ENCODE measurements at regions of chr9 and their contacts with region 1.

Region 1: DNA sequence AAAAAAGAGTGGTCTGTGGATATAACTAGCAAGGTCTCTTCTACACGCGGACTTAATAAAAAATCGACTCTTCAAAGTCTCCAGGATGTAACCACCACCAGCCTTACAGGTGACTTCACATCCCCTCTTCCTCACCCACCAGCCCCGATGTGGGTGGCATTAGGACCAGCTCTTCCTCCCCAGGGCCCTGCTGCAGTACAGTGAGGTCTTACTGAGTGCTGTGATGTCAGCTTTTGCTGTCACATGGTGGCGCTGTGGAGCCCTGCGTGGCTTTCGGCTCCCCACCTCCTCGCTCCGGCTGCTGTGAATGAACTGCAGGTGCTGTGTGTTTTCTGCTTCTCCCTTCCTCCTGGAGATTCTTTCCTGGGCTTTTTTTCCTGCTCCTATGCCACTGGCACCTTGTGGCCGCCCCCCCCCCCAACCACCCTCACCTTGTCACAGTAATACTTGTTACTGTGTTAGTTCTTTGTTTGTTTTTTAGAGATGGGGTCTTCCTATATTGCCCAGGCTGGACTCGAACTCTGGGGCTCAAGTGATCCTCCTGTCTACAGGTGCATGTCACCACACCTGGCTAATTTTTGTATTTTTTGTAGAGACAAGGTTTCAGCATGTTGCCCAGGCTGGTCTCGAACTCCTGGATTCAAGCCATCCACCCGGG is 15.8 kb upstream of the RAPGEF1 start:
- DNase-seq: peak; percentile 71 to 81
- ATAC-seq: peak; percentile 97 to 98
- H3K4me3 ChIP-seq: no peak overlapping the region
- H3K27ac ChIP-seq: no peak overlapping the region
- H3K4me1 ChIP-seq: peaks cover 6% of the 10 kb centered on the region; the same call in 1 of the 3 replicates
- CTCF ChIP-seq: peak; percentile 84
- EP300 ChIP-seq: no peak
- POLR2A ChIP-seq: no peak
- RAD21 ChIP-seq: peak; percentile 61 to 67

Region 2: GRCh38 chr9:131728961-131729360 is 26.7 kb before region 1 on chr9:
- CTCF ChIA-PET with region 1: no interaction called
- POLR2A ChIA-PET with region 1: no interaction called
- DNase-seq: no peak
- ATAC-seq: no peak
- H3K4me3 ChIP-seq: no peak overlapping the region
- H3K27ac ChIP-seq: no peak overlapping the region; a peak in 1 of 6 replicates
- H3K4me1 ChIP-seq: peaks cover 57% of the 10 kb centered on the region
- CTCF ChIP-seq: no peak
- EP300 ChIP-seq: no peak
- POLR2A ChIP-seq: no peak
- RAD21 ChIP-seq: no peak

Region 3: DNA sequence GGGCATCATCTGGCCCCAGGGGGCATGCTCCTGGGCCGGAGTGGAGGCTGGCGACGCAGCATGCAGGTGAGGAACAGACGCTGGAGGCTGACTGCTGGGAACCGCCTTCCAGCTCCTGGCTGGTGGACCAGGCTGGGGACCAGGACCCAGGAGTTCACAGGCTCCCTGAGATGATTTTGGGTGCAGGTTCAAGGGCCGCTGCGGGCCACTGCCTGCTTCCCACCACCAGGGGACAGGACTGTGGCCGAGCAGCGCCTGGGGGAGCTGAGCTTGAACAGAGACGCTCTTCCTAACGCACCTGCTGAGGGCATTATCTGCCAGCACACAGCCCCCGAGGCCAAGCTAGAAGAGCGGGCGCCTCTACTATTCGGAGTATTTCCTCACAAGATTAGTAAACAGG is 116.3 kb after region 1 on chr9:
- CTCF ChIA-PET with region 1: no interaction called
- POLR2A ChIA-PET with region 1: no interaction called
- DNase-seq: no peak
- ATAC-seq: peak in 1 of 2 experiments; percentile 64; a peak in 3 of 6 replicates
- H3K4me3 ChIP-seq: no peak overlapping the region
- H3K27ac ChIP-seq: no peak overlapping the region
- H3K4me1 ChIP-seq: no peaks in the 10 kb centered on the region
- CTCF ChIP-seq: no peak
- EP300 ChIP-seq: no peak
- POLR2A ChIP-seq: no peak
- RAD21 ChIP-seq: 0 out of 5 replicates have a peak, but pooled peaks of 1 of the 2 experiments have one; percentile 12

Region 4: DNA sequence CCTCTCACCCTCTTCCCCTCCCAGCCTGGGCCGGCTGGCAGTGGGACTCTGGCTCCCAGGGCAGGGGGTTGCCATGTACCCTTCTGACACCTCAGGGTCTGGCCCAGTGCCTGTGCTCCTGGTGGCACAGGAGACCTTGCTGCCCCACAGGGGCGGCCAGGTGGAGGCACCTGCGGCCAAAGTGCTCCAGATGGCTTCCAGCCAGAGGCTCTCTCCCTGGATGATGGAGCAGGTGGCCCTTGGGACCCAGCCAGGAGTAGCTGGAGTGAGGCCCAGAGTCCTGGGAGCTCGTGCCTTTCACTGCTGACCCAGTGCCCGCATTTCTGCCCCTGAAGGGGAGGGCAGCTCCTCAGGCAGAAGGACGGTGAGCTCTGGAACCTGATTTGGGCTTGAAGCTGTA is 493.5 kb after region 1 on chr9:
- CTCF ChIA-PET with region 1: interaction called, 263 read pairs
- POLR2A ChIA-PET with region 1: no interaction called
- DNase-seq: no peak
- ATAC-seq: no peak
- H3K4me3 ChIP-seq: no peak overlapping the region
- H3K27ac ChIP-seq: no peak overlapping the region
- H3K4me1 ChIP-seq: no peaks in the 10 kb centered on the region
- CTCF ChIP-seq: no peak
- EP300 ChIP-seq: no peak
- POLR2A ChIP-seq: no peak
- RAD21 ChIP-seq: no peak

Region 5: GRCh38 chr9:132268725-132269352 is 513.2 kb after region 1 on chr9:
- CTCF ChIA-PET with region 1: interaction called, 19 read pairs
- POLR2A ChIA-PET with region 1: no interaction called
- DNase-seq: peak; percentile 58 to 79
- ATAC-seq: peak; percentile 70 to 89; a peak in 5 of 6 replicates
- H3K4me3 ChIP-seq: no peak overlapping the region
- H3K27ac ChIP-seq: peak overlapping the region; percentile 87 to 89
- H3K4me1 ChIP-seq: peaks cover 32% of the 10 kb centered on the region
- CTCF ChIP-seq: peak; percentile 83
- EP300 ChIP-seq: no peak
- POLR2A ChIP-seq: no peak
- RAD21 ChIP-seq: peak; percentile 42 to 53